Mammary epithelial cell (primary cell): ENCODE measurements at regions of chr20 and their contacts with region 1.

Region 1: GRCh38 chr20:50478162-50479036 is 31.8 kb upstream of the PTPN1 start:
- DNase-seq: peak; percentile 43
- H3K4me3 ChIP-seq: no peak overlapping the region
- H3K27ac ChIP-seq: no peak overlapping the region
- H3K4me1 ChIP-seq: peaks cover 10% of the 10 kb centered on the region
- H3K27me3 ChIP-seq: no peaks in the 10 kb centered on the region
- CTCF ChIP-seq: peak; percentile 61 to 63

Region 2: GRCh38 chr20:50575847-50576720 is 97.7 kb after region 1 on chr20:
- CTCF ChIA-PET with region 1: interaction called, 3 read pairs
- dilution Hi-C with region 1: no loop called
- in situ Hi-C with region 1: loop called (anchors 10 kb)
- intact Hi-C with region 1: loop called (anchors 2 kb)
- DNase-seq: no peak
- H3K4me3 ChIP-seq: no peak overlapping the region
- H3K27ac ChIP-seq: no peak overlapping the region
- H3K4me1 ChIP-seq: no peaks in the 10 kb centered on the region
- H3K27me3 ChIP-seq: no peaks in the 10 kb centered on the region
- CTCF ChIP-seq: peak; percentile 57 to 75